PC-3 (cell line): ENCODE measurements at regions of chr3 and their contacts with region 1.

Region 1: GRCh38 chr3:50121416-50122032 is 32.8 kb downstream of the RBM5 start:
- DNase-seq: peak; percentile 88
- ATAC-seq: peak; percentile 87
- H3K4me3 ChIP-seq: no peak overlapping the region
- H3K27ac ChIP-seq: no peak overlapping the region
- H3K4me1 ChIP-seq: no peaks in the 10 kb centered on the region
- H3K27me3 ChIP-seq: no peaks in the 10 kb centered on the region
- CTCF ChIP-seq: peak; percentile 94

Region 2: DNA sequence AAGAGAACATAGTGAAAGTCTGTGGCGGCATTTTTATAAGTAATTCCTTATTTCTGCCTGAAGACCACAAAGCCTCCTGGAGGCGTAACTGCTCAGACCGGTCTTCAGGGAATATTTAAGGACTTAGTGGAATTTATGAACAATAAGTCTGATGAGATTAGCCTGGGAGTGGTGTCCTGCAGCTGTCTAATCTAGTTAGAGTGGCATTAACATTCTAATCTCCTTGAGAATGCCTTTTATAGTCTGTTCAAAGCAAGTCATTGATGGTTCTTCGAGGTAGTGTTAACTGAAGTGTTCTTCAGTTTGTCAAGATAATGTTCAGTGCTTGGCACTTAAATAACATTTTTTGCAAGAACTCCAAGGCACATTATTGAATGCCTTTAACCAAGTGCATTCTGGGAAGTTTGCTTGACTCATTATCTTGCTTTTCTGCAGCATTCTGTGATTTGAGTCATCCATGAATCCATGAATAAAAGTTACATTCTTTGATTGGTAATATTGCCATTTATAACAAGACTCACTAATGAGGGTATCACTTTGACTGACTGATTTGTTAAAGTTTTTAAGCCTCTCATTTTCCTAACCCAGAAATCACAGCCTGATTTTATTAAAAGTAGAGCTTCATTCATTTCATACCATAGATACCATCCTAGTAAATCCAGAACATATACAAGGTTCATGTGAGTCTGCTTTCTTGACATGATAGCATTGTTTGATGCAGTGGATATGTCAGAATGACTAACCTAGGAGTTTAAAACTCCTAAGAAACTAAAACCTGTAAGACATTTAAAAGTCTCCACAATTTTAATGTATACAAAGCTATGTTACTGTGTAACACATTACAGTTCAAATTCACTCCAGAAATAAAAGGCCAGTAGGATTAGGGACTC is 20.3 kb before region 1 on chr3:
- CTCF ChIA-PET with region 1: no interaction called
- POLR2A ChIA-PET with region 1: interaction called, 17 read pairs
- intact Hi-C with region 1: no loop called
- DNase-seq: peak; percentile 30
- ATAC-seq: no peak
- H3K4me3 ChIP-seq: no peak overlapping the region
- H3K27ac ChIP-seq: no peak overlapping the region
- H3K4me1 ChIP-seq: no peaks in the 10 kb centered on the region
- H3K27me3 ChIP-seq: no peaks in the 10 kb centered on the region
- CTCF ChIP-seq: no peak

Region 3: GRCh38 chr3:50154840-50155474 is 33.4 kb after region 1 on chr3 and contains the start of gene SEMA3F:
- CTCF ChIA-PET with region 1: no interaction called
- POLR2A ChIA-PET with region 1: no interaction called
- intact Hi-C with region 1: loop called (anchors 2 kb)
- DNase-seq: peak; percentile 85
- ATAC-seq: peak; percentile 71
- H3K4me3 ChIP-seq: peak within 1 kb of the TSS; percentile 81
- H3K27ac ChIP-seq: no peak within 1 kb of the TSS
- H3K4me1 ChIP-seq: peaks cover 37% of the 10 kb centered on the region
- H3K27me3 ChIP-seq: no peaks in the 10 kb centered on the region
- CTCF ChIP-seq: no peak
- total RNA-seq, gene SEMA3F: 47.3 and 50.5 TPM in 2 replicates

Region 4: DNA sequence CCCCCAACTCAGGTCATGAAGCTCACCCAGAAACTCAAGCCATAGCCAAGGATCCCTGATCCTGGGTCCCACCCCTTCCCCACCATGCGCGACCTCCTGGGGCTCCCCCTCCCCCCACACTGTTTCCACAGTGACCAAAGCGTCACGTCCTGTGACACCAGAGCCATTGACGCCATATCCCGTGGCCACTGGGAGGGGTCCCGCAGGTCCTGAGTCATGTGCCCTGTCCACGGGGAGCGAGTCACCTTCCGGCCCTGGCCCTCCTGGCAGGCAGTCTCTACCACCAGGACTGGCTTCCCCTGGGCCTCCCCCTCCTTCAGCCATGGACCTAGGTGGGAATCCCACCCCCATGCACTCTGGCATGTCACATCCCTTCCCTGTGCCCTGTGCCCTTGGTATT is 49.2 kb after region 1 on chr3:
- CTCF ChIA-PET with region 1: no interaction called
- POLR2A ChIA-PET with region 1: no interaction called
- intact Hi-C with region 1: loop called (anchors 5 kb)
- DNase-seq: peak; percentile 71
- ATAC-seq: peak; percentile 41
- H3K4me3 ChIP-seq: no peak overlapping the region
- H3K27ac ChIP-seq: peak overlapping the region; percentile 96
- H3K4me1 ChIP-seq: peaks cover 66% of the 10 kb centered on the region
- H3K27me3 ChIP-seq: no peaks in the 10 kb centered on the region
- CTCF ChIP-seq: no peak